ENCODE measurements at regions of chr21 and their contacts with region 1.

Region 1: DNA sequence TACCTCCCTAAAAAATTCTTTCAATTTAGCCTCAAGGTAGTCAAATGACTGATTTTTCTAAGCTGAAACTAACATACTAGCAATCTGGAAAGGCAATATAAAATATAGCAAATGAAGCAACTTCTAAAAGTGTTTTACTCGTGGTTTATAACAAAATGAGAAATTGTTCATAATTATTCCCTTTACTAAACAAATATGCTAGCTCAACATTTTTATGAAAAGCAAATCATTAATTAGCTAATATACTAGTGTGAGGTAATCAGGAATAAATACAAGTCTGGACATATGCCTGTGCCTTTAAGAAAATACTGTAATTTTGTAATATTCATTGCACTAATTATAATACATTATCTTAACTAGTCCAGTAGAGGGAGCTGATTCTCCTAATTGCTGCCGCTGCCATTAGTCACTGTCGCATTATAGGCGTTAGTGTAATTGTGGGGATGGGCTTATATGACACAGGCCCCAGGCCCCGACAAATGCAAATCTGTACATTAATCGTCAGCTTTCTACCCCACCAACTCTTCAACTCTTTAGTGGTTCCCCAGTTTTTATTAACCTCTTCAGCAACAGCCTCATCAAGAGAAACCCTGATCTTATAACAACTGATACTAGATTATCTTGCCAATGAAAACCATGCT is 160.9 kb downstream of the GABPA start:
- DNase-seq: no peak
- ATAC-seq: peak; percentile 73
- H3K4me3 ChIP-seq: no peak overlapping the region
- H3K27ac ChIP-seq: no peak overlapping the region
- H3K4me1 ChIP-seq: no peaks in the 10 kb centered on the region
- H3K27me3 ChIP-seq: no peaks in the 10 kb centered on the region
- CTCF ChIP-seq: peak; percentile 26 to 43 (median 42); a peak in 4 of 6 replicates
- EP300 ChIP-seq: no peak
- POLR2A ChIP-seq: no peak
- RAD21 ChIP-seq: peak; percentile 77

Region 2: DNA sequence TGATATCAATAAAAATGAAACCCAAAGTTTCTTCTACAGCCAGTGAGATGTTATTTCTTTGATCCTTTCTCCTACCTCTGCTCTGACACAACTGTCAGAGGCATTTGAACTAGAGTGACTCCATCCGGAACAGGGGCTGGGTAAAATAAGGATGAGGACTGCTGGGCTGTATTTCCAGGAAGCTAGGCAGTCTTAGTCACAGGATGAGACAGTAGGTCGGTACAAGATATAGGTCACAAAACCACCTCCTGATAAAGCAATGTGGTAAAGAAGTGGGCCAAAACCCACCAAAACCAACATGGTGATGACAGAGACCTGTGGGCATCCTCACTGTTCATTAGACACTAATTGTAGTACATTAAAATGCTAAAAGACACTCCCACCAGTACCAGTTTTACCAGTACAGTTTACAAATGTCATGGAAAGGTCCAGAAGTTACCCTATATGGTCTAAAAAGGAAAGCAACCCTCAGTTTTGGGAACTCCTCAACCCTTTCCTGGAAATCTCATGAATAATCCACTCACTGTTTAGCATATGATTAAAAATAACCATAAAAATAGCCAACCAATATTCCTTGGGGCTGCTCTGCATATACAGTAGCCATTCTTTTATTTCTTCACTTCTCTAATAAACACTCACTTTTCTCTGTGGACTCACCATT is 64.3 kb before region 1 on chr21:
- CTCF ChIA-PET with region 1: no interaction called
- POLR2A ChIA-PET with region 1: no interaction called
- RAD21 ChIA-PET with region 1: no interaction called
- SMC1A ChIA-PET with region 1: no interaction called
- in situ Hi-C with region 1: no loop called
- intact Hi-C with region 1: no loop called
- DNase-seq: no peak
- ATAC-seq: no peak
- H3K4me3 ChIP-seq: no peak overlapping the region
- H3K27ac ChIP-seq: no peak overlapping the region
- H3K4me1 ChIP-seq: no peaks in the 10 kb centered on the region
- H3K27me3 ChIP-seq: no peaks in the 10 kb centered on the region
- CTCF ChIP-seq: no peak
- EP300 ChIP-seq: no peak
- POLR2A ChIP-seq: no peak
- RAD21 ChIP-seq: no peak

Region 3: GRCh38 chr21:25881525-25882376 is 13.9 kb before region 1 on chr21:
- CTCF ChIA-PET with region 1: interaction called, 10 read pairs
- POLR2A ChIA-PET with region 1: no interaction called
- RAD21 ChIA-PET with region 1: no interaction called
- SMC1A ChIA-PET with region 1: interaction called, 3 read pairs
- in situ Hi-C with region 1: no loop called
- intact Hi-C with region 1: no loop called
- DNase-seq: peak; percentile 9
- ATAC-seq: peak; percentile 95
- H3K4me3 ChIP-seq: no peak overlapping the region
- H3K27ac ChIP-seq: no peak overlapping the region
- H3K4me1 ChIP-seq: no peaks in the 10 kb centered on the region
- H3K27me3 ChIP-seq: no peaks in the 10 kb centered on the region
- CTCF ChIP-seq: peak; percentile 77 to 97 (median 96)
- EP300 ChIP-seq: no peak
- POLR2A ChIP-seq: no peak
- RAD21 ChIP-seq: peak; percentile 89

Measured in GM12878 (cell line).